B cell (primary cell): ENCODE measurements at regions of chr12 and their contacts with region 1.

Region 1: GRCh38 chr12:106386813-106387535 is 29.4 kb downstream of the POLR3B start:
- DNase-seq: no peak
- ATAC-seq: no peak
- H3K4me3 ChIP-seq: no peak overlapping the region
- H3K4me3 Mint-ChIP-seq: no peak overlapping the region
- H3K27ac ChIP-seq: no peak overlapping the region
- H3K27ac Mint-ChIP-seq: no peak overlapping the region
- H3K4me1 ChIP-seq: no peaks in the 10 kb centered on the region
- H3K4me1 Mint-ChIP-seq: no peaks in the 10 kb centered on the region
- H3K27me3 ChIP-seq: peaks cover 0 to 3% (median 0%) of the 10 kb centered on the region in 4 experiments
- H3K27me3 Mint-ChIP-seq: peaks cover 4% of the 10 kb centered on the region
- CTCF ChIP-seq: no peak

Region 2: GRCh38 chr12:106417926-106418910 is 31.2 kb after region 1 on chr12:
- CTCF ChIA-PET with region 1: no interaction called
- POLR2A ChIA-PET with region 1: no interaction called
- intact Hi-C with region 1: no loop called
- DNase-seq: no peak
- ATAC-seq: no peak
- H3K4me3 ChIP-seq: no peak overlapping the region
- H3K4me3 Mint-ChIP-seq: no peak overlapping the region
- H3K27ac ChIP-seq: no peak overlapping the region
- H3K27ac Mint-ChIP-seq: no peak overlapping the region
- H3K4me1 ChIP-seq: no peaks in the 10 kb centered on the region
- H3K4me1 Mint-ChIP-seq: no peaks in the 10 kb centered on the region
- H3K27me3 ChIP-seq: no peaks in the 10 kb centered on the region
- H3K27me3 Mint-ChIP-seq: no peaks in the 10 kb centered on the region
- CTCF ChIP-seq: no peak

Region 3: GRCh38 chr12:106841510-106842302 is 454.7 kb after region 1 on chr12:
- CTCF ChIA-PET with region 1: interaction called, 56 read pairs
- POLR2A ChIA-PET with region 1: no interaction called
- intact Hi-C with region 1: loop called (anchors 1 kb)
- DNase-seq: peak; percentile 52
- ATAC-seq: no peak
- H3K4me3 ChIP-seq: no peak overlapping the region
- H3K4me3 Mint-ChIP-seq: no peak overlapping the region
- H3K27ac ChIP-seq: no peak overlapping the region
- H3K27ac Mint-ChIP-seq: no peak overlapping the region
- H3K4me1 ChIP-seq: no peaks in the 10 kb centered on the region
- H3K4me1 Mint-ChIP-seq: no peaks in the 10 kb centered on the region
- H3K27me3 ChIP-seq: no peaks in the 10 kb centered on the region
- H3K27me3 Mint-ChIP-seq: no peaks in the 10 kb centered on the region
- CTCF ChIP-seq: peak; percentile 70

Region 4: DNA sequence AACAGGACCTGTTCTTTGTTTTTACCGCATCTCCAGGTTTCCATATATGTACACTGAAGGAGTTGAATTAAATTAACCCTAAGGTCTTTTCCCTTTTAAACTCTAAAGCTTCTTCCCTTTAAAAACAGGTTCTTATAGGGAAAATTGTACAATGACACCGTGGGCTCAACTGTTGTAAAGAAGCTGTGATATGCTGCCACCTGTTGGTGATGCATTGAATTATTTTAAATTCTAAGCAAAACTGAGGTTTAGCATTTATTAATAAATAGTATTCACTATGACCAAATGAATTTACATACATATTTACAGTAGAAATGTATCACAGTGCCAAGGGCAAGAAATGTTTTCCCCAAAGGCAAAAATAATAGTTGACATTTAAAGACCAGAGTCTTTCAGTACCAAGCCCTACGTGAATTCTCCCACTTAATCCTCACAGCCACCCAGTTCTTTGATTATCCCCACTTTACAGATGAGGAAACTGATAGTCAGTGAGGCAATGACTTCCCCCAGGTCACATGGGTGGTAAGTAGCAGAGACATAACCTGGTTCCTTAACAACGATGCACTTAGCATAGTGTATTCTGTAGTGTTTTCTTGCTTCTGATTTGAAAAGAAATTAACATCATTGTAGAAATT is 533.1 kb after region 1 on chr12:
- CTCF ChIA-PET with region 1: interaction called, 36 read pairs
- POLR2A ChIA-PET with region 1: interaction called, 3 read pairs
- intact Hi-C with region 1: loop called (anchors 1 kb)
- DNase-seq: peak; percentile 64
- ATAC-seq: no peak
- H3K4me3 ChIP-seq: no peak overlapping the region
- H3K4me3 Mint-ChIP-seq: no peak overlapping the region
- H3K27ac ChIP-seq: no peak overlapping the region
- H3K27ac Mint-ChIP-seq: no peak overlapping the region
- H3K4me1 ChIP-seq: peaks cover 0 to 18% of the 10 kb centered on the region in 2 donors
- H3K4me1 Mint-ChIP-seq: no peaks in the 10 kb centered on the region
- H3K27me3 ChIP-seq: peaks cover 11 to 82% (median 72%) of the 10 kb centered on the region in 4 experiments
- H3K27me3 Mint-ChIP-seq: peaks cover 84% of the 10 kb centered on the region
- CTCF ChIP-seq: peak; percentile 96

Region 5: DNA sequence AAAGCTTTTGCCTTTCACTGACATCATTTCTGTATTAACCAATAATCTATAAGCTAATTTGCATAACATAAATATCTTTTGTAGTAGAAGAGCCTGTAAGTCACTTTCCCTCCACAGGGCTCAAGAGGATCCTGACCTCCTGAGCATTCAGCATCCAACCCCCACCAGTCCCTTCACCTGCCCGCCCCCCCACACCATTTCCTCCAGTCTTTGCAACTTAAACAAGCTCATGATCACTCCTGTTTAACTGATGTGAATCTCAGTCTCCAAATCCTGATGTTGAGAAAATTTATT is 718.4 kb after region 1 on chr12:
- CTCF ChIA-PET with region 1: interaction called, 13 read pairs
- POLR2A ChIA-PET with region 1: no interaction called
- intact Hi-C with region 1: no loop called
- DNase-seq: no peak
- ATAC-seq: no peak
- H3K4me3 ChIP-seq: no peak overlapping the region
- H3K4me3 Mint-ChIP-seq: no peak overlapping the region
- H3K27ac ChIP-seq: no peak overlapping the region
- H3K27ac Mint-ChIP-seq: no peak overlapping the region
- H3K4me1 ChIP-seq: no peaks in the 10 kb centered on the region
- H3K4me1 Mint-ChIP-seq: no peaks in the 10 kb centered on the region
- H3K27me3 ChIP-seq: peaks cover 0 to 7% (median 6%) of the 10 kb centered on the region in 4 experiments
- H3K27me3 Mint-ChIP-seq: peaks cover 42% of the 10 kb centered on the region
- CTCF ChIP-seq: no peak